ENCODE measurements at regions of chr14 and their contacts with region 1.

Region 1: DNA sequence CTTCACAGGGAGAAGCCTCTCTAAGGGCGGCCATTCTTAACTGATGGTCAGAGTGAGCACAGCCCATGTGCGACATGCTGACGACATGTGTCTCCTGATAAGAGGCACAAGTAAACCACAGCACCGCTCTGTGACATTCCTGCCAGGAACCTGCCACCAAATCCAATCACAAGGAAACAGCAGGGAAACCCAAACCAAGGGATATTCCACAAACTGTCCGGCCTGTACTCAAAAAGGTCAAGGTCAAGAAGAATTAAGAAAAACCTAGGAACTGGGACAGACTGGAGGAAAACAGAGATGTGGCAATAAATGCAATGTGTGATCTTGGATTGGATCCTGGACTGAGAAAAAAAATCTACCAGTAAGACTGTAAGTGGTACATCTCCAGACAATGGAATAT is 91.9 kb downstream of the SYNE3 start:
- DNase-seq: no peak
- H3K4me3 ChIP-seq: no peak overlapping the region
- H3K27ac ChIP-seq: no peak overlapping the region
- H3K27me3 ChIP-seq: no peaks in the 10 kb centered on the region
- CTCF ChIP-seq: no peak

Region 2: DNA sequence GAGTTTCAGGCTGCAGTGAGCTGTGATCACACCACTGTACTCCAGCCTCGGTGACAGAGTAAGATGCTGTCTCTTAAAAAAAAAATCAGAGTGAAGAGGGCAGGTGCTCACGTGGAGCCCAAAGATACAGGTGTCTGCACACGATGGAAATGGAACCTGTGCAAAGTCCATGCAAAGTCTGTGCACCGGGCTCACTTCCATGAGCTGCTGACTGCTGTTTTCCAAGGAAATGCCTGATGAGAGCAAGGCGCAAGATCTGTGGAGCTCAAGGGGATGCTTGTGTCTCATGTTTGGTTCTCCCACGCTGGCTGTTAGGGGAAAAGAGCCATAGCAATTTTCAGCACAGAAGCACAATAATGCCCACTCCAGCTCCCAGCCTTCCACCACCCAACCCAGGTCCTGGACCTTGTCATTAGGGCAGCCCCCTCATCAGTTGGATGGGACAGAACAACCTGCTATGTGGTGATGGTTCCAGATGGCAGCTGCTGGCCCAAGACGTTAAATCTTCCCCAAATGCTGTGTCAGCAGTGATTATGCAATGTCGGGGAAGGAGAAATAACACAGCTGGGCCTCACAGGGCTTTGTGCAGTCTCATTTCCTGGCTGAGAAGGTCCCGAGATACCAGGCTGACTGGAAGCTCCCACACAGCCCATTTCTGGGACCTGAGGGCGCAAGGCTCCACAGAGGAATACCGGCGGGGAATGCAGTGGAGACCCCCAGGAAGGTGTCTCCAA is 239.3 kb before region 1 on chr14:
- intact Hi-C with region 1: loop called in 1 of 2 experiments (anchors 10 kb)
- DNase-seq: no peak
- H3K4me3 ChIP-seq: peak overlapping the region in 2 of 59 donors; percentile 2 to 9
- H3K27ac ChIP-seq: peak overlapping the region in 49 of 59 donors; percentile 1 to 84 (median 63)
- H3K27me3 ChIP-seq: no peaks in the 10 kb centered on the region
- CTCF ChIP-seq: no peak

Measured in dorsolateral prefrontal cortex (tissue), 120 donors.